ENCODE measurements at regions of chr5 and their contacts with region 1.

Region 1: DNA sequence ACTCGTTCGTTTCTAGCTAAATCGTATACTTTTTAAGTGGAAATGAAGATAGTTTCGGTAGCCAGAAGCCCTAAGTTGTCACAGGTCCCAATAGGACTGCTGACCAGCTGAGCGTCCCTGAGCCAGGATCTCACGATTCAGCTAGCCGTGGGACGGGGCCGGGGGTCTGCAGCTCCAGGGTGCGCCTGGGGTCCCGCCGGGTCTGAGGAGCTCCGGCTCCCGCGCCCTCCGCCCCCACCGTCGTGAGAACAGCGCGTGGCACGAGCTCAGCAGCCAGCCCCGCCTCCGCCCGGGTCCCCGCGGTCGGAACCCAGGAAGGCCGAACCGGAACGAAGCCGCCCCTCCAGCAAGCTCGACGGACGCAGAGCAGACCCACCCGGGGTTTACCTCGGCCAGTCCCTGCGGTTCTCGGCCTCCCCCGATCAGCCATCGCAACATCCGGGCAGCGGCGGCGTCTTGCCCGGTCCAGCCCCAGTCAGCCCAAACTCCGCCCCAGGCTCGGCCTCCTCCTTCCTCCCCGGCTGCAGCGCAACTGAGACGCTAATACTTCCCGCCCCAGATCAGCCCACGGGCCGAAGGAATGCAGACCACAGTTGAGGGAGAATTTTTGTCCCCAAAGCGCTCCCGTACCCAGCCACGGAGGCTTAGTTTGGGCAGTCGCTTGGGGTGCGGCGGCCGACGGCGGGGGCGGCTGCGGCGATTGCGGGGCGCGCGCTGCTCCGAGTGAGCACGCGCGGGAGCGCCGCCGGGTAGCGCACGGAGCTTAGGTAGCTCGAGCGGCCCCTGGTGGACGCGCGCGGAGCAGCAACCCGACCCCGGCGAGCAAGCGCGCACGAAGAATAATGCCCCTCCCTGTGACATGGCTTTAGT is at the start of gene WDR41:
- DNase-seq: peak; percentile 92
- ATAC-seq: peak; percentile 90
- H3K4me3 Mint-ChIP-seq: peak within 1 kb of the TSS; percentile 79
- H3K27ac Mint-ChIP-seq: peak within 1 kb of the TSS; percentile 90
- H3K4me1 Mint-ChIP-seq: peaks cover 20% of the 10 kb centered on the region
- H3K27me3 Mint-ChIP-seq: peaks cover 3% of the 10 kb centered on the region
- CTCF ChIP-seq: peak; percentile 89
- total RNA-seq, gene WDR41: 24.3 to 27.4 TPM

Region 2: GRCh38 chr5:77143998-77144836 is 347.8 kb before region 1 on chr5:
- CTCF ChIA-PET with region 1: interaction called, 27 read pairs
- POLR2A ChIA-PET with region 1: no interaction called
- intact Hi-C with region 1: loop called (anchors 1 kb)
- DNase-seq: peak; percentile 77
- ATAC-seq: peak; percentile 79
- H3K4me3 Mint-ChIP-seq: no peak overlapping the region
- H3K27ac Mint-ChIP-seq: no peak overlapping the region
- H3K4me1 Mint-ChIP-seq: peaks cover 5% of the 10 kb centered on the region
- H3K27me3 Mint-ChIP-seq: peaks cover 1% of the 10 kb centered on the region
- CTCF ChIP-seq: peak; percentile 79

Region 3: DNA sequence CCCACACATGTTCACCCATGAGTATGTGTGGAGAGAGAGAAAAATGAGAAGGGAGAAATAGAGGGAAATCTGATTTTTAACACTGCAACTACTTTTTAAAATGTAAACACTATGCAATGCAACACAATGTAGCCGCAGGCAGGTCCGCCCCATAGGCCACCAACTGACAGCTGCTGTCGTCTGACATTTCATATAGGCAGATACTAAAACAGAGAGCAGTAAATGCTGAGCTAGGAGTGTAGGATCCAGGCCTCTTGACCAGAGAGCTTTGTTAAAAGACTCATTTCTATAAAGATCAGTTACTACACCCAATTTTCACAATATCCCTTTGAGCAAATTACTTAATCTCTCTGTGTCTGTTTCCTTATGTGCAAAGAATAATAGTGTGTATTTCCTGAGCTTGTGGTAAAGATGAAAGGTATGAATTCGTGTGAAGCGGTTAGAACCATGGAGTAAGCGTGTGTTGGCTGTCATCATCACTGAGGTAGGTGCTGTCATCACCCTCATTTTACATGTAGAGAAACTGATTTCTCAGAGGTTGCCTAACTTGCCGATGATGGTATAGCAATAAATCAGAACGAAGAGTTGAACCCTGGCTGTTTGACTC is 336.7 kb before region 1 on chr5:
- CTCF ChIA-PET with region 1: interaction called, 10 read pairs
- POLR2A ChIA-PET with region 1: no interaction called
- intact Hi-C with region 1: no loop called
- DNase-seq: peak; percentile 63
- ATAC-seq: peak; percentile 93
- H3K4me3 Mint-ChIP-seq: no peak overlapping the region
- H3K27ac Mint-ChIP-seq: peak overlapping the region; percentile 37
- H3K4me1 Mint-ChIP-seq: peaks cover 24% of the 10 kb centered on the region
- H3K27me3 Mint-ChIP-seq: peaks cover 3% of the 10 kb centered on the region
- CTCF ChIP-seq: no peak

Region 4: GRCh38 chr5:77379558-77380061 is 112.4 kb before region 1 on chr5:
- CTCF ChIA-PET with region 1: interaction called, 13 read pairs
- POLR2A ChIA-PET with region 1: no interaction called
- intact Hi-C with region 1: no loop called
- DNase-seq: peak; percentile 74
- ATAC-seq: peak; percentile 91
- H3K4me3 Mint-ChIP-seq: no peak overlapping the region
- H3K27ac Mint-ChIP-seq: peak overlapping the region; percentile 68
- H3K4me1 Mint-ChIP-seq: peaks cover 26% of the 10 kb centered on the region
- H3K27me3 Mint-ChIP-seq: peaks cover 8% of the 10 kb centered on the region
- CTCF ChIP-seq: no peak

Region 5: DNA sequence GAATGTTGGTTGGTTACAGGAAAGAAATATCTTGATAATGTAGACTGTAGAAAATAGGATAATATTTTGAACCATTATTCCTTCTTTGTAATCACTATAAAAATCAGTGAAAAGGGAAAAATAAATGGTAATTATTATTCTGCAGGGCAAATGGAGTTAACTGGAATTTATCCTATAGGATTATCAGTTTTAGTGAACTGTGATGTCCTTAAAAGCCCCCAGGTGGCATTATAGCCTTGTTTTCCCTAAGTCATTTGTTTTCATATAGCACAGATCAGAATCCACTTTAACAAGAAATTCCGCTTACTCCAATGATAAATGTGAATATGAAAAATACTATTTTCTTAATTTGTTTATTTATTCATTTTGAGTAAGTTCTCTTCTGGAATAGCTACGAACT is 26.3 kb after region 1 on chr5:
- CTCF ChIA-PET with region 1: no interaction called
- POLR2A ChIA-PET with region 1: no interaction called
- intact Hi-C with region 1: no loop called
- DNase-seq: no peak
- ATAC-seq: no peak
- H3K4me3 Mint-ChIP-seq: no peak overlapping the region
- H3K27ac Mint-ChIP-seq: no peak overlapping the region
- H3K4me1 Mint-ChIP-seq: no peaks in the 10 kb centered on the region
- H3K27me3 Mint-ChIP-seq: peaks cover 10% of the 10 kb centered on the region
- CTCF ChIP-seq: no peak

Region 6: DNA sequence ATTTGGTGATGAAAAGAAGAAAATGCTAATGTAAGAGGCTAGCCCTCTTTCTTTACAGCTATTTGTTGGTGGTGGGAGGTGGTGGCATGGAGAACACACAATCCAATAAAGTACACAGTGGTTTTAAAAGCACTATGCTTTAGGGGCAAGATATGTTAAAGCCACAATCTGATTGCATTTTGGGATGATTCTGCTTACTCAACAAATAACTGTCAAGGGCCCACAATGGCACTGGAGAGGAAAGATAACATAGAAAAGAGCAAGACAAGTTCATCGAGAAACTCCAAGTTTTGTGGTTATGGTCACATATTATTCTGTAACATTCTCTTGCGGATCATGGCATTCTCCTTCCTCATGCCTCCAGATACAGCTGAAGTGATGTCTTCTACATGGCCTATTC is 107.7 kb after region 1 on chr5:
- CTCF ChIA-PET with region 1: no interaction called
- POLR2A ChIA-PET with region 1: no interaction called
- intact Hi-C with region 1: no loop called
- DNase-seq: no peak
- ATAC-seq: no peak
- H3K4me3 Mint-ChIP-seq: no peak overlapping the region
- H3K27ac Mint-ChIP-seq: no peak overlapping the region
- H3K4me1 Mint-ChIP-seq: no peaks in the 10 kb centered on the region
- H3K27me3 Mint-ChIP-seq: peaks cover 37% of the 10 kb centered on the region
- CTCF ChIP-seq: no peak